Psoas muscle (tissue), 8 donors: ENCODE measurements at regions of chr6 and their contacts with region 1.

Region 1: DNA sequence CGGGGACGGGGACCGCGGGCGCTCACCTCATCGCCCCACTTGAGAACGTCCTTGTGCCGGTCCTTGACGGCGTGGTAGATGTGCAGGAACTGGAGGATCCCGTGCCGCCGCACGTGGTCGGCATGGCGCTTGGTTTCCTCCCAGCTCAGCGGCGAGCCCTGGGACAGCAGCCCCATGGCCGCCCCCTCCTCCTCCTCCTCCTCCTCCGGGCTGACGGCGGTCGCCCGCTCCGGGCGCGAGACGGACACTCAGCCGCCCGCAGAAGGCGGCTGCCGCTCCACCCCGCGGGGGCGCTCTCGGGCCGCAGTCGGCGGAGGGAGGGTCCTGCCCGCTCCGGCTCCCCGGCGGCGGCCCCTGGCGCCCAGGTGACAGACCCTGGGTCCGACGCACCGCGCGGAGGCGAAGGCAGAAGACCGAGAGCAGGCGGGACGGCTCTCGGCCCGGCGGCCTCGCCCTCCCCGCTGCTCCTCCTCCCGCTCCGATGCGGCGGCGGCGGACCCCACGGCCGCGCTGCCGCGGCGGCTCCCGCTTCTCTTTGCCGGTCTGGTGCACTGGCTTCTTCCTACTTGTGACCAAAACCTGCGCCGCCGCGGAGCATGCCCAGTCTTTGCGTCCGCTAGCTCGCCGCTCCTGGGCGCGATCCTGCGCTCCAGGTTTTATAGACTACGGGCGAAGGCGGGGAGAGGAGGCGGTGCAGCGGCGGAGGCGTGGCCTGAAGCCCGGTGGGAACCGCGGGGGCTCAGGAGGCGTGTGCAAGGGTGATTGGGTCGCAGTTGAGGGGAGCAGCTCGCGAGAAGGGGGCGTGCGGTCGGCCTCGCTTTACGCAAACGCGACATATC is at the start of gene GCLC:
- DNase-seq: peak; percentile 95 to 97
- ATAC-seq: peak; percentile 79 to 82 (median 80)
- H3K4me3 ChIP-seq: peak within 1 kb of the TSS; percentile 75
- H3K27ac ChIP-seq: peak within 1 kb of the TSS; percentile 96
- H3K4me1 ChIP-seq: peaks cover 40% of the 10 kb centered on the region
- H3K27me3 ChIP-seq: no peaks in the 10 kb centered on the region
- CTCF ChIP-seq: peak; percentile 71
- total RNA-seq, gene GCLC: 14.0 to 31.9 (median 22.8) TPM

Region 2: DNA sequence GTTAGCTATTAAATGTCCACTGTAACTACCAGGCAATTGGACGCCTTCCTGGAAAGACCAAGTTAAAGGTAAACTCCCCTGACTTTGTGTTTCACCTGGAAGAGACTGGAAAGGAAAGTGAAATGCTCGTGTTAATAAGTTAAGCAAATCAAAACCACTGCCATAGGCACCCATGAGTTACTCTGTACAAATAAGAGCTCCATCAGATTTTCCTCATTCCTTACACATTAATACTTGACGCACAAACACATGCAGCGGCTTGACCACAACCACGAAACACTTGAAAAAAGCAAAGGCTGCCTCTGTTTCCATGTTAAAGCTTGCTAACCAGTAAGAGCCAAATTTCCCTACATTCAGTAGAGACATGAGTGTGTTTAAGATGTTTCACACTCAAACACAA is 415.8 kb before region 1 on chr6:
- intact Hi-C with region 1: no loop called
- DNase-seq: no peak
- ATAC-seq: no peak
- H3K4me3 ChIP-seq: no peak overlapping the region
- H3K27ac ChIP-seq: no peak overlapping the region
- H3K4me1 ChIP-seq: no peaks in the 10 kb centered on the region
- H3K27me3 ChIP-seq: peaks cover 0 to 15% (median 0%) of the 10 kb centered on the region in 3 donors
- CTCF ChIP-seq: no peak

Region 3: GRCh38 chr6:53565886-53566285 is 21.2 kb after region 1 on chr6:
- intact Hi-C with region 1: no loop called
- DNase-seq: no peak
- ATAC-seq: no peak
- H3K4me3 ChIP-seq: no peak overlapping the region
- H3K27ac ChIP-seq: no peak overlapping the region
- H3K4me1 ChIP-seq: no peaks in the 10 kb centered on the region
- H3K27me3 ChIP-seq: no peaks in the 10 kb centered on the region
- CTCF ChIP-seq: no peak

Region 4: DNA sequence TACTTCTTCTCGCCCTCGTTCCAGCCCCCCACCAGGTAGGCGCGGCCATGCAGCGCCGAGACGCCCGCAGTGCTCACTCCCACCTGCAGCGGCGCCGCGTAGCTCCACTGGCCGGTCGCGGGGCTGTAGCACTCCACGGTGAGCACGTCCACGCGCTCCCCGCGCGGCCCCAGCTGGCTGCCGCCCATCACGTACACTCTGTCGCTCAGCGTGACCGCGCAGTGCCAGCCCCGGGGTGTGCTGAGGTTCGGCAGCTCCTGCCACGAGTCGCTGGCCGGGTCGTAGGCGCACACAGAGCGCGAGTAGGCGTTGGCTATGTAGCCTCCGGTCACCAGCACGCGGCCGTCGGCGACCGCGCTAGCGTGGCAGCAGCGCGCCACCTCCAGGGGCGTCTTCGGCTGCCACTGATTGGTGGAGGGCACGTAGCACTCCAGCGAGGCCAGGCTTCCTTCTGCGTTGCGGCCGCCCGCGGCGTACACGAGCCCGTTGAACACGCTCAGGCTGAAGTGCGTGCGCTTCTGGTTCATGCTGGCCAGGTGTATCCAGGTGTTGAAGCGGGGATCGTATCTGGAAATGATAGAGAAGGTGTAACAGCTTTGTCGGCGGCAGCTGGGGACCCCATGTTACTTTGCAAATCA is 107.2 kb after region 1 on chr6:
- intact Hi-C with region 1: loop called (anchors 1 to 5 kb)
- DNase-seq: peak; percentile 73 to 86
- ATAC-seq: peak; percentile 87 to 92 (median 90)
- H3K4me3 ChIP-seq: peak overlapping the region; percentile 67
- H3K27ac ChIP-seq: peak overlapping the region; percentile 79
- H3K4me1 ChIP-seq: peaks cover 66% of the 10 kb centered on the region
- H3K27me3 ChIP-seq: no peaks in the 10 kb centered on the region
- CTCF ChIP-seq: peak; percentile 29